CD4-positive, alpha-beta T cell (primary cell): ENCODE measurements at regions of chr22 and their contacts with region 1.

Region 1: DNA sequence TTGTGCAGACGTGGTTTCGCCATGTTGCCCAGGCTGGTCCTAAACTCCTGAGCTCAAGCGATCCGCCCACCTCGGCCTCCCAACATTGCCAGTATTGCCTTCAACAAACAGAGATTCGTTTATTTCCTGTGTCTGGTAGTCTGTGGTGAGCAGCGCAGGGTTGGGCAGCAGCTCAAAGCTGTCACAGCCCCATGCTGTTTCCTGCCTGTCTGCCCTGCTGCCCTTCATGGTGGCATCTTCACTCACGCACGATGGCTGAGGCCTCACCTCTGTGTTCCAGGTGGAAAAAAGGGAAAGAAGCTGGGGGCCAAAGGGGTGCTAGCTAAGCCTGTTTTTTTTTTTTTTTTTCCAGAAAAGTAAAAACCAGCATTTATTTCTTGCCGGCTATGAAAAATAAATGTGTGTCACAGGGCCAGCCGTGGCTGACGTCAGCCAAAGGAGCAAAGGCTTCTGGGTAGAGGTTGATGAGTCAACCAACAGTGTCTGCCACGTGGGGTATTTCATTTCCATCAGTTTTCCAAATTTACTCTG is 28.8 kb downstream of the TBC1D22A start:
- DNase-seq: peak; percentile 67 to 95 (median 82)
- ATAC-seq: peak; percentile 90
- H3K4me3 ChIP-seq: peak overlapping the region; percentile 36
- H3K4me3 Mint-ChIP-seq: peak overlapping the region; percentile 79
- H3K27ac ChIP-seq: peak overlapping the region; percentile 91 to 97
- H3K27ac Mint-ChIP-seq: peak overlapping the region; percentile 100
- H3K4me1 ChIP-seq: peaks cover 55% of the 10 kb centered on the region
- H3K4me1 Mint-ChIP-seq: peaks cover 51% of the 10 kb centered on the region
- H3K27me3 ChIP-seq: no peaks in the 10 kb centered on the region
- H3K27me3 Mint-ChIP-seq: no peaks in the 10 kb centered on the region
- CTCF ChIP-seq: no peak

Region 2: GRCh38 chr22:46748908-46749675 is 42.2 kb before region 1 on chr22:
- CTCF ChIA-PET with region 1: no interaction called
- POLR2A ChIA-PET with region 1: interaction called, 11 read pairs
- intact Hi-C with region 1: loop called in 1 of 2 experiments (anchors 2 kb)
- DNase-seq: peak; percentile 63 to 86 (median 80)
- ATAC-seq: peak; percentile 97
- H3K4me3 ChIP-seq: peak overlapping the region; percentile 51
- H3K4me3 Mint-ChIP-seq: peak overlapping the region; percentile 73
- H3K27ac ChIP-seq: peak overlapping the region; percentile 78 to 91
- H3K27ac Mint-ChIP-seq: peak overlapping the region; percentile 96
- H3K4me1 ChIP-seq: peaks cover 50% of the 10 kb centered on the region
- H3K4me1 Mint-ChIP-seq: peaks cover 34% of the 10 kb centered on the region
- H3K27me3 ChIP-seq: no peaks in the 10 kb centered on the region
- H3K27me3 Mint-ChIP-seq: no peaks in the 10 kb centered on the region
- CTCF ChIP-seq: no peak

Region 3: GRCh38 chr22:46774253-46774979 is 16.9 kb before region 1 on chr22:
- CTCF ChIA-PET with region 1: interaction called, 4 read pairs
- POLR2A ChIA-PET with region 1: interaction called, 14 read pairs
- intact Hi-C with region 1: loop called in 1 of 2 experiments (anchors 1 kb)
- DNase-seq: peak in 6 of 14 experiments; percentile 10 to 68 (median 49)
- ATAC-seq: peak; percentile 30
- H3K4me3 ChIP-seq: peak overlapping the region; percentile 21
- H3K4me3 Mint-ChIP-seq: peak overlapping the region; percentile 85
- H3K27ac ChIP-seq: peak overlapping the region; percentile 56 to 71
- H3K27ac Mint-ChIP-seq: peak overlapping the region; percentile 87
- H3K4me1 ChIP-seq: peaks cover 75% of the 10 kb centered on the region
- H3K4me1 Mint-ChIP-seq: peaks cover 77% of the 10 kb centered on the region
- H3K27me3 ChIP-seq: no peaks in the 10 kb centered on the region
- H3K27me3 Mint-ChIP-seq: no peaks in the 10 kb centered on the region
- CTCF ChIP-seq: no peak